CD4-positive, alpha-beta memory T cell (primary cell): ENCODE measurements at regions of chr19 and their contacts with region 1.

Region 1: GRCh38 chr19:31349160-31349881 is at the start of gene TSHZ3:
- DNase-seq: peak; percentile 49 to 57 (median 55)
- H3K4me3 ChIP-seq: peak within 1 kb of the TSS in 1 of 2 donors; percentile 47
- H3K4me3 Mint-ChIP-seq: peak within 1 kb of the TSS; percentile 81 to 90 (median 86)
- H3K27ac ChIP-seq: no peak within 1 kb of the TSS
- H3K27ac Mint-ChIP-seq: peak within 1 kb of the TSS in 3 of 7 donors; percentile 52 to 79 (median 59)
- H3K4me1 ChIP-seq: peaks cover 43% of the 10 kb centered on the region
- H3K4me1 Mint-ChIP-seq: peaks cover 23 to 40% (median 34%) of the 10 kb centered on the region in 4 donors
- H3K27me3 ChIP-seq: peaks cover 50% of the 10 kb centered on the region
- H3K27me3 Mint-ChIP-seq: peaks cover 33 to 43% of the 10 kb centered on the region in 2 donors
- total RNA-seq, gene TSHZ3: 0.28 to 0.44 TPM

Region 2: DNA sequence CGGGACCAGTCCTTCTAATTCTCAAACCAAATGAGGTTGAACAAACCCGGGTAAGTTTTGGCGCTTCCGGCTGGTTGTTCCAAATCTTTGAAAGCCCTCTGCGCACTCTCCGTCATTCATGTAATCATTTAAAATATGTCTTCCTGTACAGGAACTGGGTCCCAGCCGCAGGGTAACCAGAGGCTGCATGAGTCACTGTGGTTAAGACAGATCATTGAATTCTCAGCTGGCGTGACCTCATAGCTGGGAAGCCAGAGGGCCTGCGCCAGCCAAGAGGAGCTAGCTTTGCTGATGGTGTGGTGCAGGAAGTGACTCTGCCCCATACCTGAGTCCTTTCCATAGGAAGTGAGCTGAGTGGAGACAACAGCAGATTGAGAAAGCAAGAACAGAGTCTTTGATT is 135.2 kb before region 1 on chr19:
- CTCF ChIA-PET with region 1: no interaction called
- POLR2A ChIA-PET with region 1: no interaction called
- intact Hi-C with region 1: loop called (anchors 2 kb)
- DNase-seq: peak; percentile 86 to 97 (median 92)
- H3K4me3 ChIP-seq: peak overlapping the region; percentile 8 to 10
- H3K4me3 Mint-ChIP-seq: peak overlapping the region; percentile 36 to 84 (median 76)
- H3K27ac ChIP-seq: peak overlapping the region; percentile 25
- H3K27ac Mint-ChIP-seq: peak overlapping the region; percentile 86 to 98 (median 96)
- H3K4me1 ChIP-seq: peaks cover 20% of the 10 kb centered on the region
- H3K4me1 Mint-ChIP-seq: peaks cover 17 to 33% (median 20%) of the 10 kb centered on the region in 4 donors
- H3K27me3 ChIP-seq: no peaks in the 10 kb centered on the region
- H3K27me3 Mint-ChIP-seq: no peaks in the 10 kb centered on the region

Region 3: GRCh38 chr19:32580901-32581703 is 1231.8 kb after region 1 on chr19 and contains the start of gene PDCD5:
- CTCF ChIA-PET with region 1: no interaction called
- POLR2A ChIA-PET with region 1: no interaction called
- intact Hi-C with region 1: loop called (anchors 5 kb)
- DNase-seq: peak; percentile 93 to 97 (median 94)
- H3K4me3 ChIP-seq: peak within 1 kb of the TSS; percentile 72 to 88
- H3K4me3 Mint-ChIP-seq: peak within 1 kb of the TSS; percentile 90 to 99 (median 96)
- H3K27ac ChIP-seq: peak within 1 kb of the TSS; percentile 74
- H3K27ac Mint-ChIP-seq: peak within 1 kb of the TSS; percentile 83 to 96 (median 92)
- H3K4me1 ChIP-seq: peaks cover 25% of the 10 kb centered on the region
- H3K4me1 Mint-ChIP-seq: peaks cover 18 to 39% (median 28%) of the 10 kb centered on the region in 4 donors
- H3K27me3 ChIP-seq: no peaks in the 10 kb centered on the region
- H3K27me3 Mint-ChIP-seq: peaks cover under 1% of the 10 kb centered on the region in 2 donors
- total RNA-seq, gene PDCD5: 61.1 to 67.4 TPM